Posterior vena cava (tissue), 2 donors: ENCODE measurements at regions of chr5 and their contacts with region 1.

Region 1: GRCh38 chr5:178838695-178839685 is 20.8 kb upstream of the ZNF354B start:
- DNase-seq: peak; percentile 87

Region 2: GRCh38 chr5:178324481-178325310 is 514.3 kb before region 1 on chr5:
- intact Hi-C with region 1: loop called in 1 of 2 experiments (anchors 5 kb)
- DNase-seq: peak; percentile 68

Region 3: DNA sequence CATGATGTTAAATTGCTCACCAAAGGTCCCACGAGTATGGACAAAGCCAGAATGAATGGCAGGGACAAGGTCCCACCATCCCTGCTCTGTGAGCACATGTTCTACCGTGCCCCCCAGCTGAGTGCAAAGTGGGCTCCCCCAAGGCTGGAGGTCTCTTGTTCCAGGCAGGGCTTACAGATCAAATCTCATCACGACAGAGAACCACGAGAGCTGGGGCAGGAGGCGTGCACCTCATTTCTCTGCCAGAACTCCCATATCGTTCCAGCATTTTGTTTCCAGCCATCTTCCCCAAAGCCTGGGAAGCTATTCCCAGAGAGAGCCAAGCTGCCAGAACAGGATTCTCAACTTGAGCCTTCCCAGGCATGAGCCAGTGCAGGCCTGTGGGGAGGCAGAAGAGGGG is 329.7 kb after region 1 on chr5:
- intact Hi-C with region 1: no loop called
- DNase-seq: peak; percentile 67